H1 (cell line): ENCODE measurements at regions of chr16 and their contacts with region 1.

Region 1: GRCh38 chr16:11715246-11715947 is 27.3 kb downstream of the TXNDC11 start:
- DNase-seq: no peak
- H3K4me3 ChIP-seq: no peak overlapping the region
- H3K27ac ChIP-seq: no peak overlapping the region
- H3K4me1 ChIP-seq: no peaks in the 10 kb centered on the region
- H3K27me3 ChIP-seq: no peaks in the 10 kb centered on the region
- CTCF ChIP-seq: no peak
- EP300 ChIP-seq: no peak
- POLR2A ChIP-seq: no peak
- RAD21 ChIP-seq: no peak

Region 2: DNA sequence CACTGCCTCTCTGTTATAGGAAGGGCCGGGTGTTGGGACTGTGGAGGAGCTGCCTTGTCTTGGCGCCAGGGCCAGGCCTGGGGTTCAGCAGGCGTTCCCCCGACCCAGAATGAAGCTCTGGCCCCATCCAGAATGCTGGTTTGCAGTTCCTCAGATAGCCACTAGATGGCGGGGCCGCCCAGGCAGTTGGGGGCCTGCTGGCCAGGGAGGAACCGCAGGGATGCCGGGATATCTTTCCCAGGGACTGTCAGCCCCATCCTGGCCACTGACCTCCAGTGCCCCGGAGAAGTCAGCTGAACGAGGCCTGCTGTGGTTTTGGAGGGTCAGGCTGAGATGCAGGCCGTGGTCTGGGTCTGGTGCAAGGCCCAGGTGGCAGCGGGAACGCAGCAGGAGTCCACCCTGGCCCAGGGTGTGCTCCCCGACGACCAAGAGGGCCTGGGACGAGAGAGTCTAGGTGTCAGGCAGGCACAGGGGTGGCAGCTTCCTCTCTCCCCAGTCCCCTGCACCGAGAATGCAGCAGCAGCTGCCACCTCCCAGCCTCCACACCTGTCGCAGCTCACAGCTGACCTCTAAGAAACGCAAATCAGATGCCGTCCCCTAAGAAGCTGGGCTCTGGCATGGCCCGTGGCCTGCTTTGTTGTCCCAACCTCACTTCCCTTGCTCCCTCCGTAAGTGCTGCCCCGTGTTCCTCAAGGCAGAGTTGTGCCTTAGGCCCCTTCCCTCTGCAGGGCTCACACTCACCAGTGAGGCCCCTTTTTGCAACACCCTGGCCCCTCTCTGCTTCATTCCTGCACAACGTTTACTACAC is 319.0 kb before region 1 on chr16:
- CTCF ChIA-PET with region 1: interaction called, 50 read pairs
- POLR2A ChIA-PET with region 1: no interaction called
- DNase-seq: peak; percentile 60 to 98
- H3K4me3 ChIP-seq: no peak overlapping the region
- H3K27ac ChIP-seq: no peak overlapping the region
- H3K4me1 ChIP-seq: peaks cover 0 to 12% (median 7%) of the 10 kb centered on the region in 4 experiments; a peak in 4 of 7 replicates
- H3K27me3 ChIP-seq: no peaks in the 10 kb centered on the region
- CTCF ChIP-seq: peak; percentile 96 to 97 (median 97)
- EP300 ChIP-seq: no peak
- POLR2A ChIP-seq: no peak
- RAD21 ChIP-seq: peak; percentile 99 to 100

Region 3: DNA sequence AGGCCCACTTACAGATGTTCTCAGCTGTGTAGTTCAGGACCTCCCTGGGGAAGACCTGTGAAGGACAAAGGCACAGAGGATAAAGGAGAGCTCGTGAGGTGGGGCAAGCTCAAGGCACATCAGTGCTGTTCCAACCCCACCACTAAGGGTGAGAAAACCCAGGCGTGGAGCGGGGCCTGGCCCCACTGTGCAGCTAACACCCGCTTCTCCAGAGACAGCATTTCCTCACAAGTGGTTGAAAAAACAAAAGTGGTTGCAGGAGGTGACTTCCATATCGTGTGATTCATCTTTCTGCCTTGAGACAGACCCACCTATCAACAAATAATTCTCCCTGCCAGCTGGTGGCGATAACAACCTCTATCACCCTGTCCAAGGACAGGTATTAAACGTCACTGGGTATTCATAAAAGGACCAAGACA is 17.1 kb before region 1 on chr16:
- CTCF ChIA-PET with region 1: interaction called, 17 read pairs
- POLR2A ChIA-PET with region 1: interaction called, 3 read pairs
- DNase-seq: no peak
- H3K4me3 ChIP-seq: no peak overlapping the region
- H3K27ac ChIP-seq: no peak overlapping the region
- H3K4me1 ChIP-seq: no peaks in the 10 kb centered on the region
- H3K27me3 ChIP-seq: no peaks in the 10 kb centered on the region
- CTCF ChIP-seq: peak in 2 of 3 experiments; percentile 26 to 39; a peak in 2 of 4 replicates
- EP300 ChIP-seq: no peak
- POLR2A ChIP-seq: no peak
- RAD21 ChIP-seq: peak; percentile 28 to 29; a peak in 3 of 4 replicates

Region 4: DNA sequence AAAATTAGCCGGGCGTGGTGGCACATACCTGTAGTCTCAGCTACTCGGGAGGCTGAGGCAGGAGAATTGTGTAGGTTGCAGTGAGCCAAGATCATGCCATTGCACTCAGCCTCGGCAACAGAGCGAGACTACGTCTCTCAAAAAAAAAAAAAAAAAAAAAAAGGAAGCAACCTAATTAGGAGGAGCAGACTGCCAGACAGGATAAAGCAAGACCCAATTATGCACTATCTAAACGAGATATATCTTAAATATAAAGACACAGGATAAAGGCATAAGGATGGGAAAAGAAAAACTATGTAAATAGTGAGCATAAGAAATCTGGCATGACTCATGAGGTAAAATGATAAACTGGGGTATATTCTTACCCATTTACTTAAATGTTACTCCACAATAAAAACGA is 22.3 kb after region 1 on chr16:
- CTCF ChIA-PET with region 1: interaction called, 10 read pairs
- POLR2A ChIA-PET with region 1: interaction called, 3 read pairs
- DNase-seq: no peak
- H3K4me3 ChIP-seq: no peak overlapping the region
- H3K27ac ChIP-seq: no peak overlapping the region
- H3K4me1 ChIP-seq: peaks cover 2 to 6% (median 3%) of the 10 kb centered on the region in 4 experiments; a peak in 2 of 7 replicates
- H3K27me3 ChIP-seq: no peaks in the 10 kb centered on the region
- CTCF ChIP-seq: no peak
- EP300 ChIP-seq: no peak
- POLR2A ChIP-seq: no peak
- RAD21 ChIP-seq: no peak

Region 5: GRCh38 chr16:11748404-11749254 is 33.2 kb after region 1 on chr16:
- CTCF ChIA-PET with region 1: no interaction called
- POLR2A ChIA-PET with region 1: no interaction called
- DNase-seq: no peak
- H3K4me3 ChIP-seq: no peak overlapping the region
- H3K27ac ChIP-seq: no peak overlapping the region
- H3K4me1 ChIP-seq: no peaks in the 10 kb centered on the region
- H3K27me3 ChIP-seq: no peaks in the 10 kb centered on the region
- CTCF ChIP-seq: no peak
- EP300 ChIP-seq: no peak
- POLR2A ChIP-seq: no peak
- RAD21 ChIP-seq: no peak